Heart right ventricle (tissue), 16 donors: ENCODE measurements at regions of chr14 and their contacts with region 1.

Region 1: DNA sequence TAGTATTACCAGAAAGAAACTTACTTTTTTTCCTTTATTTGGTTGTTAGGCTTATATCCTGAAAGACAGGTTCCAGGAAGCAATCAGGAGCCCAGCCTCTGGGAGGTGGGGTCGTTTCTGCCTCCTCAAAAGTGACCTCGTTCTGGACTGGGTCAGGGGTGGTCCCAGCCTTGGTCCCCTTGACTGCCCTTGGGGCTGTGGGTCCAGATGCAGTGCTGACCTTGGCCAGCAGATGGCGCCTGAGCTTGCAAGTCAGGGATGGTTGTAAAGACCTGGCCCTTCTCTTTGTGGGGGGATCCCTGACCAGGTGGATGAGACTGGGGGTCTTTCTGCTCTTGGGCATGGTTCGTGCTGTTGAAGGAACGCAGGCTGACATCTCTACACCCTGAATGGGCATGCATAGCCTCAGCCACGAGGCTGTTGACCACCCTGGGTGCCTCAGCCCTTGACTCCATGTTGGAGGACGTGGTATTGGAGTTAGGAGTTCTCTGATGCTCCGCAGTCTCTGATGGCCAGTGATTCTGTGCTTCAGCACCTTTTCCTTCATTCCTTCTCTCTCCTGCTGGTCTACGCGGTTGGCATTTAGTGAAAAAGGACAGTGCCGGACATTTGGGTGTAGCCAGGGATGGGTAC is 62.4 kb downstream of the ADCK1 start:
- DNase-seq: peak; percentile 75 to 82
- ATAC-seq: peak; percentile 66 to 84 (median 78)
- H3K4me3 ChIP-seq: no peak overlapping the region
- H3K27ac ChIP-seq: no peak overlapping the region
- H3K4me1 ChIP-seq: peaks cover 0 to 5% (median 0%) of the 10 kb centered on the region in 9 donors
- H3K27me3 ChIP-seq: no peaks in the 10 kb centered on the region
- CTCF ChIP-seq: peak; percentile 88 to 99 (median 97)

Region 2: GRCh38 chr14:77965919-77966435 is 103.7 kb after region 1 on chr14:
- intact Hi-C with region 1: loop called in 1 of 10 experiments (anchors 10 kb)
- DNase-seq: no peak
- ATAC-seq: peak in 7 of 8 donors; percentile 47 to 75 (median 61)
- H3K4me3 ChIP-seq: peak overlapping the region in 8 of 10 donors; percentile 2 to 49 (median 44)
- H3K27ac ChIP-seq: no peak overlapping the region
- H3K4me1 ChIP-seq: peaks cover 0 to 7% (median 4%) of the 10 kb centered on the region in 9 donors
- H3K27me3 ChIP-seq: peaks cover 0 to 42% (median 30%) of the 10 kb centered on the region in 7 donors
- CTCF ChIP-seq: no peak

Region 3: DNA sequence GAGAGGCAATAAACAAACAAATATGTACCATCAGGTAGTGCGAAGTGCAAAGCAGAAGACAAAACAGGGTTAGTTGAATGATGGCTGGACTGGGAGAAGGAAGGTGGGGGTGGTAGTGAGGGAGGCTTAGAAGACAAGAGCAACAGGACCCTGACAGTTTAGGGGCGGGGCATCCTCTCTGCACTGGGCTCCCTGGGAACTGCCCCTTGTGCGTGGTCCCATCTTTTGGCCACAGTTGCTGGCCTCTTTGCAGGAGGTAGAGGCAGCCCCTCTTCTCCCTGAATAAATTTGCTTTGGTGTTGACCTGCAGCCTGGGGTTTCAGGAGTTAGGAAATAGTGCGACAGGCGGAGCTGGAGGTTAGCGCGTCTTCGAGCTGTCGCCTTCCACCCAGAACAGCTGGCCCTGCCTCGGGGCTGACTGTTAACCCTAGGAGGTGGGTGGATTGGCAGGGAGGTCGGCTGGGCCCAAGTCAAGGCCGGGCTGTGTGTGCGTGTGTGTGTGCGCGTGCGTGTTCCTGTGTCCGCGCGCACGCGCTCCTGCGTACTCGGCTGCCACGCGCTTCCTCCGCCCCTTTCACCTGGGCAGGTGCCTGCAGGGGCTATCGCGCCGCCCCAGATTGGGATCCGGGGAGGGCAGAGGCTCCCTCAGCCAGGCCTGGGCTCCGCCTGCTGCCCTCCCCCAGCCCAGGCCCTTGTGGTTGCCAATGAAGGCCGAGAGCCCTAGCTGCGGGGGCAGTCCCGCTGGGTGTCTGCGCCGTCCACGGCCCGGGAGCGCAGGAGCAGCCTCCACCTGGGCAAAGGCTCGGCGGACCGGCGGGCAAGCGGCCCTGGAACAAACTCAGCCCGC is 118.4 kb after region 1 on chr14:
- intact Hi-C with region 1: loop called in 2 of 10 experiments (anchors 10 kb)
- DNase-seq: peak in 1 of 2 donors; percentile 17
- ATAC-seq: peak; percentile 34 to 69 (median 54)
- H3K4me3 ChIP-seq: peak overlapping the region in 9 of 10 donors; percentile 6 to 58 (median 47)
- H3K27ac ChIP-seq: peak overlapping the region in 2 of 10 donors; percentile 8 to 56
- H3K4me1 ChIP-seq: peaks cover 0 to 19% (median 5%) of the 10 kb centered on the region in 9 donors
- H3K27me3 ChIP-seq: peaks cover 0 to 46% (median 29%) of the 10 kb centered on the region in 7 donors
- CTCF ChIP-seq: no peak

Region 4: GRCh38 chr14:78157494-78158456 is 295.5 kb after region 1 on chr14:
- intact Hi-C with region 1: loop called in 5 of 10 experiments (anchors 5 to 10 kb)
- DNase-seq: peak; percentile 15 to 17
- ATAC-seq: no peak
- H3K4me3 ChIP-seq: no peak overlapping the region
- H3K27ac ChIP-seq: no peak overlapping the region
- H3K4me1 ChIP-seq: no peaks in the 10 kb centered on the region
- H3K27me3 ChIP-seq: peaks cover 0 to 25% (median 8%) of the 10 kb centered on the region in 7 donors
- CTCF ChIP-seq: no peak

Region 5: DNA sequence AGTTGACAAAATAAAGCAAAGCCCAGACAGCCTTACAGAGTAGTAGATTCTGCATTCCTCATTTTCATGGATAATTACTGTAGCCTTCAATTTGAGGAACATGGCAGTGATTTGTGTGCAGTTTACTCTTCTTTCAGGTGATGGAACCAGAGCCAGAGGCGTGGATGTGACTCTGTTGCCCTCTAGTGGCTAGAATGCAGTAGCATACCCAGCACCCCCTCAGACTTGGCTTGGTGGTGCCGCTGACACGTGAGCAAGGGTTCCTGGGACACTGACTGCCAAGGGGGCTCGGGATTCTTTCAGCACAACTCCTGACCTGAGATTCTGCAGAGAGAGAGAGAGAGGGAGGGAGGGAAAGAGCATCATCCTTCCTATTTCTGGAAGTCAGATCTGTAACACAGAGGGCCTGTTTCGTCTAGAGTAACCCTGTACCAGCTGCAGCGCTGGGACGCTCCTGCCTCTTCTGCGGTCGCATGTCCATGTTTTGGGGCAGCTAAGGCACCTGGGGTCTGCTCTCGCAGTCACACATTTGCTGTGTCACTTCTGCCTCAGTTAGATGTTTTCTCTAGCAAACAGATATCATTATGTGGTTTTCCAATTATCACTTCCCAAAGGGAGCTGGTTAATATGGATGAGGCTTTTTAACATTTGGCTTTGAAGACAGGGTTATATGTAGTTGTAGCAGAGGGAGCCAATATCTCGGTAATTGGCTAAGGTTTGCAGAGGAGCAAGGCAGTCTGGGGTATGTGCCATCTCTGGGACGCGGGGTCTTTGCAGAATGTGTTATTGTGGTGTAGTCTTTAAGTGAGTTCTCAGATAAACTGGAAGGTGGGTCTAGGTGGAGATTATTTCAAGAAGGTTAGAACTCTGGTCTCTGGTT is 736.0 kb after region 1 on chr14:
- intact Hi-C with region 1: loop called in 5 of 10 experiments (anchors 10 kb)
- DNase-seq: peak; percentile 14 to 27
- ATAC-seq: peak; percentile 72 to 89 (median 82)
- H3K4me3 ChIP-seq: no peak overlapping the region
- H3K27ac ChIP-seq: no peak overlapping the region
- H3K4me1 ChIP-seq: no peaks in the 10 kb centered on the region
- H3K27me3 ChIP-seq: peaks cover 0 to 33% (median 0%) of the 10 kb centered on the region in 7 donors
- CTCF ChIP-seq: peak; percentile 75 to 89 (median 83)